Heart left ventricle (tissue), 16 donors: ENCODE measurements at regions of chr19 and their contacts with region 1.

Region 1: GRCh38 chr19:57240311-57241090 is at the start of gene ZNF805:
- DNase-seq: peak; percentile 97 to 98 (median 97)
- ATAC-seq: peak; percentile 99 to 100 (median 99)
- H3K4me3 ChIP-seq: peak within 1 kb of the TSS; percentile 79 to 98 (median 89)
- H3K27ac ChIP-seq: peak within 1 kb of the TSS; percentile 76 to 97 (median 90)
- H3K4me1 ChIP-seq: peaks cover 0 to 32% (median 17%) of the 10 kb centered on the region in 12 donors
- H3K27me3 ChIP-seq: no peaks in the 10 kb centered on the region
- CTCF ChIP-seq: peak in 7 of 12 donors; percentile 7 to 33 (median 16)
- POLR2A ChIP-seq: peak in 1 of 2 donors; percentile 73
- total RNA-seq, gene ZNF805: 7.0 to 15.3 (median 11.4) TPM

Region 2: DNA sequence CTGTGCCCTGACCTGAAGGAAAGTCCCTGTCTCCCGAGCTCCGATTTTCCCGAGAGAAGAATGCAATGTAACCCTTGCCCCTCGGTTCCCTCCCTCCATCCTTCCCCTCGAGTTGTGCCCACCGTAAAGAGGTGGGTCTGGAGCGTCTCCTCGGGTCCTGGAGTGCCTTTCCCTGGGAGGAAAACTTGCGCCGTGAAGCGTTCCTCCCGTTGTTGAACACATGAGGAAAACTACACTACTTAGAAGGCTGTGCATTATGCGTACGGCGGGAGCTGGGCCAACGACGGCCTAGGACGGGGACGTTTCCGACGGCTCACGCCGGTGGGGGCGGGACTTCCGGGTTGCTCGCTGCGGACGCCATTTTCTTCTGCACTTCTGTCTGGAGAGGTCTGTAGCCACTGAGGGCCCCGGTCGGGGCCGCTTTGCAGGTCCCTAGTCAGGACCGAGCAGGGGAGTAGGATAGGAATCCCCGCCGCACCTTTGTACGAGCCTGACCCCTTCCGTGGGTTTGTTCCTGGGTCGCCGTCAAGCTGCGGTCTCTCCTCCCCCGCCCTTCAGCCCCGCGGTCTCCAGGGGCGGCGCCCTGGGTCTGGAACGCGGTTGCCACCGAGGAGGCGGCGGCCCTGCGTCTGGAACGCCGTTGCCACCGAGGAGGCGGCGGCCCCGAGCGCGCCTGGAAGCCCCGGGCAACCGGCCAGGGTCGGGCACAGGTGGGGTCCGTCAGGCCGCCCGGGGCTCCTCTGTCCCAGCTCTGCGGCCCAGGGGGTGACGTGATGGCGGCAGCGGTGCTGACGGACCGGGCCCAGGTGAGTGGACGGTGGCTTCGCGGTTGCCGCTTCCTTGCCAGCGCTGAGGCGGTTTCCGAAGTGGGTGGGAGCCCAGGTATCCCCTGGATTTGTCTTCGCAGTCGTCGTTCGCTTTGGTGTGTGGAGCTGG is 49.1 kb before region 1 on chr19 and contains the start of gene ZNF264:
- intact Hi-C with region 1: loop called in 1 of 10 experiments (anchors 5 kb)
- DNase-seq: peak; percentile 93 to 97 (median 95)
- ATAC-seq: peak; percentile 98 to 99 (median 98)
- H3K4me3 ChIP-seq: peak within 1 kb of the TSS; percentile 83 to 100 (median 98)
- H3K27ac ChIP-seq: peak within 1 kb of the TSS; percentile 64 to 96 (median 89)
- H3K4me1 ChIP-seq: peaks cover 0 to 29% (median 19%) of the 10 kb centered on the region in 12 donors
- H3K27me3 ChIP-seq: no peaks in the 10 kb centered on the region
- CTCF ChIP-seq: peak in 4 of 12 donors; percentile 6 to 16 (median 14)
- POLR2A ChIP-seq: peak in 1 of 2 donors; percentile 55
- total RNA-seq, gene ZNF264: 13.3 to 30.1 (median 20.3) TPM

Region 3: GRCh38 chr19:57279418-57280066 is 39.0 kb after region 1 on chr19:
- intact Hi-C with region 1: loop called in 8 of 10 experiments (anchors 1 to 5 kb)
- DNase-seq: peak; percentile 92 to 95 (median 92)
- ATAC-seq: peak; percentile 96 to 98 (median 97)
- H3K4me3 ChIP-seq: peak overlapping the region; percentile 68 to 99 (median 92)
- H3K27ac ChIP-seq: peak overlapping the region; percentile 94 to 100 (median 99)
- H3K4me1 ChIP-seq: peaks cover 8 to 44% (median 29%) of the 10 kb centered on the region in 12 donors
- H3K27me3 ChIP-seq: no peaks in the 10 kb centered on the region
- CTCF ChIP-seq: peak in 10 of 12 donors; percentile 11 to 66 (median 46)
- POLR2A ChIP-seq: peak in 1 of 2 donors; percentile 54

Region 4: GRCh38 chr19:57350877-57351805 is 110.6 kb after region 1 on chr19 and contains the start of gene ZNF304:
- intact Hi-C with region 1: loop called in 1 of 10 experiments (anchors 5 kb)
- DNase-seq: peak; percentile 95 to 97 (median 96)
- ATAC-seq: peak; percentile 97 to 99 (median 98)
- H3K4me3 ChIP-seq: peak within 1 kb of the TSS; percentile 75 to 100 (median 92)
- H3K27ac ChIP-seq: peak within 1 kb of the TSS; percentile 41 to 91 (median 86)
- H3K4me1 ChIP-seq: peaks cover 0 to 44% (median 21%) of the 10 kb centered on the region in 12 donors
- H3K27me3 ChIP-seq: no peaks in the 10 kb centered on the region
- CTCF ChIP-seq: no peak
- POLR2A ChIP-seq: peak in 1 of 2 donors; percentile 43
- total RNA-seq, gene ZNF304: 7.0 to 14.5 (median 9.7) TPM